Right cardiac atrium (tissue), 5 donors: ENCODE measurements at regions of chr3 and their contacts with region 1.

Region 1: GRCh38 chr3:113495035-113495434 is 19.9 kb downstream of the SPICE1 start:
- DNase-seq: no peak
- ATAC-seq: peak in 1 of 2 donors; percentile 52
- H3K4me3 ChIP-seq: no peak overlapping the region
- H3K27ac ChIP-seq: no peak overlapping the region
- H3K4me1 ChIP-seq: no peaks in the 10 kb centered on the region
- H3K27me3 ChIP-seq: no peaks in the 10 kb centered on the region

Region 2: GRCh38 chr3:113231827-113232253 is 263.2 kb before region 1 on chr3:
- intact Hi-C with region 1: no loop called
- DNase-seq: no peak
- ATAC-seq: peak; percentile 45 to 56
- H3K4me3 ChIP-seq: no peak overlapping the region
- H3K27ac ChIP-seq: no peak overlapping the region
- H3K4me1 ChIP-seq: peaks cover 5% of the 10 kb centered on the region
- H3K27me3 ChIP-seq: no peaks in the 10 kb centered on the region

Region 3: DNA sequence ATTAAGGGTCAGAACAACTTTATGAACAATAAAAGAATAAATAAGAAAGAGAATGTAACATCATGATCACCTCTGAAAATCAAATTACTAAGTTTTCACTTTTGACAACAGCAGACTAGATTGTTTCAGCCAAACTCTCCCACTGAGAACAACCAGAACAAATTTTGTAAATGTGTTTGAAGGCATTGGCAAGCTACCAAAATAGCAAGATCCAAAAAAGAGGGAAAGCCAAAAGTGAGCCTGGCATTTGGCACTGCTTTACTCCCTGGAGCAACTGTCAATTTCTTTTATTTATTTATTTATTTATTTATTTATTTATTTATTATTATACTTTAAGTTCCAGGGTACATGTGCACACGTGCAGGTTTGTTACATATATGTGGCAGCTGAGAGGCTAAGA is 121.0 kb before region 1 on chr3:
- intact Hi-C with region 1: no loop called
- DNase-seq: no peak
- ATAC-seq: no peak
- H3K4me3 ChIP-seq: no peak overlapping the region
- H3K27ac ChIP-seq: no peak overlapping the region
- H3K4me1 ChIP-seq: no peaks in the 10 kb centered on the region
- H3K27me3 ChIP-seq: no peaks in the 10 kb centered on the region

Region 4: GRCh38 chr3:113575206-113575605 is 80.2 kb after region 1 on chr3:
- intact Hi-C with region 1: loop called in 1 of 4 experiments (anchors 10 kb)
- DNase-seq: no peak
- ATAC-seq: peak in 1 of 2 donors; percentile 72
- H3K4me3 ChIP-seq: no peak overlapping the region
- H3K27ac ChIP-seq: no peak overlapping the region
- H3K4me1 ChIP-seq: no peaks in the 10 kb centered on the region
- H3K27me3 ChIP-seq: no peaks in the 10 kb centered on the region

Region 5: GRCh38 chr3:113606539-113607218 is 111.6 kb after region 1 on chr3:
- intact Hi-C with region 1: no loop called
- DNase-seq: no peak
- ATAC-seq: no peak
- H3K4me3 ChIP-seq: no peak overlapping the region
- H3K27ac ChIP-seq: no peak overlapping the region
- H3K4me1 ChIP-seq: no peaks in the 10 kb centered on the region
- H3K27me3 ChIP-seq: no peaks in the 10 kb centered on the region

Region 6: DNA sequence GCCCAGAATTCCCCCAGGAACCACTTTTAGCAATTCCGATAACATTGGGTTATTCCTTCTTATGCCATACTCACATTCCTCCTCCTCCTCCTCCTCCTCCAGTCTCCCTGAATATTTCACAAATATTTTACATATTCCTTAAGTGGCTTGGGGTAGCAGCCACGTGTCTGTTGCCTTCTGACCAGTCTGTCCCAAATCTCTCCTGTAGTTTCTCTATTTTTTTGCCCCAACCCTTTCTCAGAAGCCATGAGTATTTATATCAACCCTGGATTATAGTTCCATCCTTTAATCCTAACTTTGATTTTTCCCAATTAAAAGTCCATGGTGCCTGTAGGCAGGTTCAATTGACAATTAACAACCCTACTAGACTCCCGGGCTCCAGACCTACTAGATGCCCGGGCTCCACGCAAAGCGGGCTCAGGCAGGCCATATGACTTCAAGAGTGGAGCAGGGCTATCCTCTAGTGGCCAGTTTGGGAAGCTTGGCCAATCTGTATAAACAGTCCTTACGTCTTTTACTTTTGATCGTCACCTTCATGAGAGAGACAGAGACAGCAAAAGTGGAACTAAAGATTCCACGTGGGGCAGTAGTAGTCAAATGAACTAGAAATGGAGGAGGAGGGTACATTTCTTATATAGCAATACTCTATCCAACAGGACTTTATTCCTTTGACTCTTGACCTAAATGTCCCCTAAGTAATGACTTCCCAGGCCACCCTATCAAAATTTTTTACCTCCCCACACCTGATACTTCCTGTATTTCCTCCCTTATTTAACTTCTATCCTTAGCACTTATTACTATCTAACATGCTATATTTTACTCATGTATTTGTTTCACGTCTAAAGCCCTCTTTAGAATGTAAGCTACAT is 131.7 kb after region 1 on chr3:
- intact Hi-C with region 1: loop called (anchors 5 to 10 kb)
- DNase-seq: peak; percentile 52 to 78 (median 53)
- ATAC-seq: peak; percentile 90 to 94
- H3K4me3 ChIP-seq: peak overlapping the region; percentile 32
- H3K27ac ChIP-seq: no peak overlapping the region
- H3K4me1 ChIP-seq: peaks cover 2% of the 10 kb centered on the region
- H3K27me3 ChIP-seq: no peaks in the 10 kb centered on the region

Region 7: GRCh38 chr3:113832477-113833164 is 337.6 kb after region 1 on chr3:
- intact Hi-C with region 1: no loop called
- DNase-seq: no peak
- ATAC-seq: no peak
- H3K4me3 ChIP-seq: no peak overlapping the region
- H3K27ac ChIP-seq: no peak overlapping the region
- H3K4me1 ChIP-seq: no peaks in the 10 kb centered on the region
- H3K27me3 ChIP-seq: no peaks in the 10 kb centered on the region